ENCODE measurements at regions of chr22 and their contacts with region 1.

Region 1: DNA sequence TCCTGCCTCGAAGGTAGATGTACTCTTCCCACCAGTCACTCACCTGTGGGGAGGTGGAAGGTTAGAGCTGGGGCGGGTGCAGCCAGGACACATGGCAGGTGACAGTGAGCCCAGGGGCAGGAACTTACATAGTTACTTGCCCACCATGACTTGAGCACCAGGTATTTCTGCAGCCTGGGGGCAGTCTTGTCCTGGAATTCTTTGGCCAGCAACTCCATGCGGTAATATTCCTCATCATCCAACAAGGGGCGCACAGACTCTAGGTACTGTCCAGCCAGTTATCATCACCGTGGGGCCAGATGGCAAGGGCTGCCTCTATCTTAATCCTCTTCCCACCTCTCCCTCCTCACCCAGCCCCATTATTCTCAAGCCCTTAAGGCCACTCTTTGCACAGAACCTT is 2.2 kb downstream of the CPT1B start:
- DNase-seq: no peak
- H3K4me3 ChIP-seq: no peak overlapping the region
- H3K27ac ChIP-seq: no peak overlapping the region
- H3K4me1 ChIP-seq: no peaks in the 10 kb centered on the region
- H3K27me3 ChIP-seq: no peaks in the 10 kb centered on the region
- CTCF ChIP-seq: peak; percentile 40 to 93 (median 60)
- EP300 ChIP-seq: no peak
- POLR2A ChIP-seq: no peak
- RAD21 ChIP-seq: peak; percentile 75 to 79

Region 2: DNA sequence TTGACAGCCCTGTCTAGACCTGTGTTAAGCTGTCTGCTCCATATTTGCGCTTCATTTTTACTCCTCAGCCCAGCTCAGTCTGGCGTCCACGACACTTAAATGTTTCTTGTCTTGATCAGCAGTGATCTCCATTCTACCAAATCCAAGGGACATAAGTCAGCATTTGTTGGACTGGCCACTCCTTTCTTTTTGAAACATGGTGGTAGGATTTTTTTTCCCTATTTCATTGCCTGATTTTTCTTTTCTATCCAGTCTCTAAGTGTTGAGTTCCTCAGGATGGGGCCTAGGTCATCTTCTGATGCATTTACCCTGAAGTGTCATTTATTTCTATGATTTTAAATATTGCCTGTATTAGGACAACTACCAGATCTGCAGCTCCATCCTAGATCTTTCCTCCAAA is 67.2 kb before region 1 on chr22:
- CTCF ChIA-PET with region 1: no interaction called
- POLR2A ChIA-PET with region 1: no interaction called
- DNase-seq: no peak
- H3K4me3 ChIP-seq: peak overlapping the region; percentile 83 to 97 (median 85)
- H3K27ac ChIP-seq: no peak overlapping the region
- H3K4me1 ChIP-seq: peaks cover 2 to 8% (median 5%) of the 10 kb centered on the region in 4 experiments
- H3K27me3 ChIP-seq: no peaks in the 10 kb centered on the region
- CTCF ChIP-seq: no peak
- EP300 ChIP-seq: no peak
- POLR2A ChIP-seq: no peak
- RAD21 ChIP-seq: no peak

Region 3: GRCh38 chr22:50525390-50526068 is 50.5 kb before region 1 on chr22 and contains the start of gene SCO2:
- CTCF ChIA-PET with region 1: interaction called, 10 read pairs
- POLR2A ChIA-PET with region 1: interaction called, 3 read pairs
- DNase-seq: peak; percentile 89 to 96
- H3K4me3 ChIP-seq: peak within 1 kb of the TSS; percentile 63 to 78 (median 67)
- H3K27ac ChIP-seq: no peak within 1 kb of the TSS; the same call in 1 of the 2 replicates
- H3K4me1 ChIP-seq: peaks cover 0 to 16% (median 7%) of the 10 kb centered on the region in 4 experiments; a peak in 5 of 7 replicates
- H3K27me3 ChIP-seq: peaks cover 23 to 39% (median 33%) of the 10 kb centered on the region in 4 experiments
- CTCF ChIP-seq: peak; percentile 49 to 61 (median 52)
- EP300 ChIP-seq: no peak
- POLR2A ChIP-seq: 0 out of 3 replicates have a peak, but pooled peaks of 1 of the 2 experiments have one; percentile 33
- RAD21 ChIP-seq: peak; percentile 32 to 51; a peak in 3 of 4 replicates
- total RNA-seq, gene SCO2: 2.2 TPM in 1 of 2 replicates, not detected in the other

Region 4: GRCh38 chr22:50606165-50606945 is 30.3 kb after region 1 on chr22:
- CTCF ChIA-PET with region 1: interaction called, 23 read pairs
- POLR2A ChIA-PET with region 1: interaction called, 4 read pairs
- DNase-seq: peak in 1 of 2 experiments; percentile 46
- H3K4me3 ChIP-seq: no peak overlapping the region
- H3K27ac ChIP-seq: no peak overlapping the region
- H3K4me1 ChIP-seq: peaks cover 0 to 12% (median under 1%) of the 10 kb centered on the region in 4 experiments; a peak in 4 of 7 replicates
- H3K27me3 ChIP-seq: peaks cover 38 to 54% (median 48%) of the 10 kb centered on the region in 4 experiments; a peak in 6 of 7 replicates
- CTCF ChIP-seq: peak; percentile 41 to 48 (median 43)
- EP300 ChIP-seq: no peak
- POLR2A ChIP-seq: no peak
- RAD21 ChIP-seq: peak; percentile 14 to 40; a peak in 2 of 4 replicates

Region 5: DNA sequence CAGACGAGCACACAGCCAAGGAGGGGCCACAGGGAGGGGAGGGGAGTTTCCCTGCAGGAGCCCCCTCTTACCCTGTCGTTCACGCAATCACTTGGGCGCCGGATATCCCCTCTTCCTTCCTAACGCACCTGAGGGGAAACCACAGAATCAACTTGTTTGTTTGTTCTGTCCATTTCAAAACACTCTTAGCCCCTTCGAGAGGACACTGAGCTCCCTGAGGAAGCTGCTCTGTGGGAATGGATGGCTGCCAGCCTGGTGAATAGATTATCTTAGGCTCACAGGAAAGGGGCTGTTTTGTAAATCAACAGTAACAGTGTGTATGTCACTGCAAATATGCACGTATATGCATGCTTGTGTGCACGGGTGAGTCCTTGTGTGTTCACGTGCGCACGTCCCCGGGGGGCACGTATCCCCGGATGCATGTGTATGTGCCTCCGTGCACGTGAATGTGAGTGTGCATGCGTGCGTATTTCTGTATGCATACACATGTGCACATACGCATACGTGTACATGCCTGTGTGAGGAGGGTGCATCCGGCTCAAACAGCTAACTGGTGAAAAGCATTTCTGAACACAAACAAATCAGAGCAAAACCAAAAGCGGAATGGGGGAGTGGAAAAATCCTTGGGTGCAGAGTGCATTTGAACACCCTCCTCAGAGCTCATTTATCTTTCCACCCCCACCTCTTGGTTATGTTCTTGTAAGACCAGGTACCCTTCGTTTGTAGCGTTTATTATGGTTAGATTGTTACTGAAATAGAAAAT is 44.7 kb after region 1 on chr22:
- CTCF ChIA-PET with region 1: interaction called, 65 read pairs
- POLR2A ChIA-PET with region 1: no interaction called
- DNase-seq: no peak
- H3K4me3 ChIP-seq: peak overlapping the region in 1 of 4 experiments; percentile 42; a peak in 2 of 8 replicates
- H3K27ac ChIP-seq: no peak overlapping the region
- H3K4me1 ChIP-seq: peaks cover 0 to 10% (median 7%) of the 10 kb centered on the region in 4 experiments; a peak in 6 of 7 replicates
- H3K27me3 ChIP-seq: peaks cover 0 to 3% (median 0%) of the 10 kb centered on the region in 4 experiments; a peak in 3 of 7 replicates
- CTCF ChIP-seq: peak in 2 of 3 experiments; percentile 74 to 78; a peak in 2 of 4 replicates
- EP300 ChIP-seq: no peak
- POLR2A ChIP-seq: no peak
- RAD21 ChIP-seq: no peak

Region 6: DNA sequence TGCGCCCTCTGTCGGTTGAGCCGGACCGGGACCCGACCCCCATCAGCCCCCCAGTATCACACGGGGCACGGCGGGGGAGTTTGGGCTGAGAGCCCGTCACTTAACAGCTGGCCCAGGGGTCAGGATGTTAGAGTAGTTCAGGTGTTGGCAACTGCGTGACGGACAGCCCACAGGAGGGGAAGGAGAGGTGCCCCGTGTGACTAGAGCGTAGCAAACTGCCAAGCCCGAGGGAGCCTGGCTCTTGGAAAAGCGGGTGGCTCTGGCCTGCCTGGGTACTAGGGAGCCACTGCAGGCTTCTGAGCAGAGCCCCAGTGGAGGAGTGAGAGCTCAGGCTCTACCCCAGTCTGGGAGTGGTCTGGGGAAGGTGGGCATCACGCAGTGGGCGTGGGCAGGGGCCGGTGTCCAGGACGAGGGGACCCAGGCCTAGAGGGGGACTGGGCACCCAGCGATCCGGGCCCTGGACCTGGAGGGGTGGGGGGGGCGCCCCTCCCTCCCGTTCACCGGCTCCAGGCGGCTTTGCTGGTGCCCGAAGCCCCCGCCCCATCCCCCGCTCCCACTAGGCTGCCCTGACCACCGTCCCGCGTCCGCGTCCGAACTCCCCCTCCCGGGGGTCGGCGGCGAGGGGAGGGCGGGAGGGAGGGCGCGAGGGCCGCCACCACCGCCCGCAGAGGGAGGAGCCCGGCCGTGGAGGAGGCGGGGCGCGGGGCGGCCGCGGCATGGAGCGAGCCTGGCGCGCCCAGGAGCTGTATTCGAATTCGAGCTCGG is 120.9 kb after region 1 on chr22:
- CTCF ChIA-PET with region 1: interaction called, 36 read pairs
- POLR2A ChIA-PET with region 1: no interaction called
- DNase-seq: peak in 1 of 2 experiments; percentile 84
- H3K4me3 ChIP-seq: peak overlapping the region; percentile 11 to 58 (median 16); a peak in 6 of 8 replicates
- H3K27ac ChIP-seq: no peak overlapping the region
- H3K4me1 ChIP-seq: peaks cover 0 to 10% (median 0%) of the 10 kb centered on the region in 4 experiments; a peak in 4 of 7 replicates
- H3K27me3 ChIP-seq: peaks cover 6 to 24% (median 14%) of the 10 kb centered on the region in 4 experiments; a peak in 6 of 7 replicates
- CTCF ChIP-seq: peak; percentile 71 to 77 (median 76)
- EP300 ChIP-seq: no peak
- POLR2A ChIP-seq: no peak
- RAD21 ChIP-seq: peak in 1 of 2 experiments; percentile 70; a peak in 3 of 4 replicates

Measured in H1 (cell line).